ENCODE measurements at regions of chr6 and their contacts with region 1.

Region 1: DNA sequence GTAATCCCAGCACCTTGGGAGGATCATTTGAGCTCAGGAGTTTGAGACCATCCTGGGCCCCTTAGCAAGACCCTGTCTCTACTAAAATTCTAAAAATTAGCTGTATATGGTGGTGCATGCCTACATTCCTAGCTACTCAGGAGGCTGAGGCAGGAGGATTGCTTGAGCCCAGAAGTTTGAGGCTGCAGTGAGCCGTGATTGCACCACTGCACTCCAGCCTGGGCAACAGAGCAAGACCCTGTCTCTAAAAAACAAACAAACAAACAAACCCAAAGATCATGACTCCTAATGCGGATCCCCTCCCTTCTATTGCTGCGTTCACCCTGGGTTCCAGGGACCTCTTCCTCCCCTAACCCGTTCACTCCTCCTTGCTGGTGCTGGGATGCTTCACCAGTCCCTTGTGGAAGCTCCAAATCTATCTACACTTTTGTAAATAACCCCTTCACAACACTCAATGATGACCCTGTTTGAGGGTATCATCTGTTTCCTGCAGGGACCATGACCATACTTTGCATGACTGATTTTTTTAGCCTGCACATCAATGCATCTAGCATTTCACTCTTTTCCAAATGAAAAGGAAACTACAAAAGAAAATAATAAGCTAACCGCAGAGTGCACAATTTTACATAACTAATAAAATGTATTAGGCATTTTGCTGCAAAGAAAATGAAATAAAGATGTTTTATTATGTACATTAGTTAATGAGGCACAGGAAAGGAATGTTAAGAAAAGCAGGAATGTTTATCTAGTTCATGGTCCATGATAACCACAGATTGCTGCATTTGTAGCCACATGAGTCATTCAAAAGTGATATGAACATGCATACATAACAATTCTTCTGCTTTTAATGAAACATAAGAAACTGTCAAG is 30.5 kb upstream of the IPCEF1 start:
- DNase-seq: peak; percentile 82
- H3K4me3 ChIP-seq: no peak overlapping the region
- H3K27ac ChIP-seq: peak overlapping the region; percentile 50
- H3K4me1 ChIP-seq: peaks cover 17% of the 10 kb centered on the region
- H3K27me3 ChIP-seq: no peaks in the 10 kb centered on the region
- CTCF ChIP-seq: no peak
- POLR2A ChIP-seq: no peak

Region 2: GRCh38 chr6:154370545-154370944 is 16.5 kb before region 1 on chr6:
- CTCF ChIA-PET with region 1: interaction called, 18 read pairs
- POLR2A ChIA-PET with region 1: no interaction called
- dilution Hi-C with region 1: no loop called
- intact Hi-C with region 1: no loop called
- DNase-seq: peak; percentile 59
- H3K4me3 ChIP-seq: no peak overlapping the region
- H3K27ac ChIP-seq: no peak overlapping the region
- H3K4me1 ChIP-seq: peaks cover 9% of the 10 kb centered on the region
- H3K27me3 ChIP-seq: no peaks in the 10 kb centered on the region
- CTCF ChIP-seq: peak; percentile 8 to 36
- POLR2A ChIP-seq: no peak

Region 3: GRCh38 chr6:154399097-154399496 is 12.0 kb after region 1 on chr6:
- CTCF ChIA-PET with region 1: interaction called, 7 read pairs
- POLR2A ChIA-PET with region 1: no interaction called
- dilution Hi-C with region 1: no loop called
- intact Hi-C with region 1: loop called (anchors 1 kb)
- DNase-seq: peak; percentile 89
- H3K4me3 ChIP-seq: no peak overlapping the region
- H3K27ac ChIP-seq: peak overlapping the region; percentile 93
- H3K4me1 ChIP-seq: peaks cover 16% of the 10 kb centered on the region
- H3K27me3 ChIP-seq: no peaks in the 10 kb centered on the region
- CTCF ChIP-seq: no peak
- POLR2A ChIP-seq: no peak

Region 4: GRCh38 chr6:154410619-154411072 is 23.6 kb after region 1 on chr6:
- CTCF ChIA-PET with region 1: no interaction called
- POLR2A ChIA-PET with region 1: no interaction called
- dilution Hi-C with region 1: no loop called
- intact Hi-C with region 1: loop called (anchors 1 kb)
- DNase-seq: peak; percentile 97
- H3K4me3 ChIP-seq: peak overlapping the region in 1 of 3 experiments; percentile 19
- H3K27ac ChIP-seq: peak overlapping the region; percentile 99
- H3K4me1 ChIP-seq: peaks cover 25% of the 10 kb centered on the region
- H3K27me3 ChIP-seq: no peaks in the 10 kb centered on the region
- CTCF ChIP-seq: no peak
- POLR2A ChIP-seq: no peak

Region 5: GRCh38 chr6:154448448-154449096 is 61.5 kb after region 1 on chr6:
- CTCF ChIA-PET with region 1: interaction called, 3 read pairs
- POLR2A ChIA-PET with region 1: no interaction called
- dilution Hi-C with region 1: no loop called
- intact Hi-C with region 1: loop called (anchors 1 kb)
- DNase-seq: peak; percentile 77
- H3K4me3 ChIP-seq: no peak overlapping the region
- H3K27ac ChIP-seq: no peak overlapping the region
- H3K4me1 ChIP-seq: peaks cover 19% of the 10 kb centered on the region
- H3K27me3 ChIP-seq: no peaks in the 10 kb centered on the region
- CTCF ChIP-seq: peak in 1 of 2 donors; percentile 29
- POLR2A ChIP-seq: no peak